ENCODE measurements at regions of chr10 and their contacts with region 1.

Region 1: GRCh38 chr10:51433949-51434475 is 265.4 kb downstream of the CSTF2T start:
- DNase-seq: no peak
- H3K4me3 ChIP-seq: no peak overlapping the region
- H3K27ac ChIP-seq: no peak overlapping the region
- H3K4me1 ChIP-seq: no peaks in the 10 kb centered on the region
- H3K27me3 ChIP-seq: no peaks in the 10 kb centered on the region
- CTCF ChIP-seq: no peak
- EP300 ChIP-seq: no peak
- POLR2A ChIP-seq: no peak

Region 2: GRCh38 chr10:51137756-51138529 is 296.1 kb before region 1 on chr10:
- intact Hi-C with region 1: loop called in 1 of 4 experiments (anchors 5 kb)
- DNase-seq: no peak
- H3K4me3 ChIP-seq: no peak overlapping the region
- H3K27ac ChIP-seq: no peak overlapping the region
- H3K4me1 ChIP-seq: no peaks in the 10 kb centered on the region
- H3K27me3 ChIP-seq: no peaks in the 10 kb centered on the region
- CTCF ChIP-seq: no peak
- EP300 ChIP-seq: no peak
- POLR2A ChIP-seq: no peak

Region 3: GRCh38 chr10:51905032-51905431 is 471.0 kb after region 1 on chr10:
- intact Hi-C with region 1: no loop called
- DNase-seq: no peak
- H3K4me3 ChIP-seq: no peak overlapping the region
- H3K27ac ChIP-seq: no peak overlapping the region
- H3K4me1 ChIP-seq: peaks cover 1% of the 10 kb centered on the region
- H3K27me3 ChIP-seq: no peaks in the 10 kb centered on the region
- CTCF ChIP-seq: no peak
- EP300 ChIP-seq: no peak
- POLR2A ChIP-seq: no peak

Measured in ovary (tissue), 10 donors.